ENCODE measurements at regions of chr9 and their contacts with region 1.

Region 1: GRCh38 chr9:115013998-115014397 is 83.6 kb upstream of the TNFSF8 start:
- DNase-seq: peak; percentile 34 to 44
- ATAC-seq: peak in 1 of 2 donors; percentile 54
- H3K4me3 ChIP-seq: no peak overlapping the region
- H3K27ac ChIP-seq: no peak overlapping the region
- H3K4me1 ChIP-seq: no peaks in the 10 kb centered on the region
- H3K27me3 ChIP-seq: no peaks in the 10 kb centered on the region
- CTCF ChIP-seq: peak; percentile 49 to 74 (median 67)
- POLR2A ChIP-seq: no peak

Region 2: DNA sequence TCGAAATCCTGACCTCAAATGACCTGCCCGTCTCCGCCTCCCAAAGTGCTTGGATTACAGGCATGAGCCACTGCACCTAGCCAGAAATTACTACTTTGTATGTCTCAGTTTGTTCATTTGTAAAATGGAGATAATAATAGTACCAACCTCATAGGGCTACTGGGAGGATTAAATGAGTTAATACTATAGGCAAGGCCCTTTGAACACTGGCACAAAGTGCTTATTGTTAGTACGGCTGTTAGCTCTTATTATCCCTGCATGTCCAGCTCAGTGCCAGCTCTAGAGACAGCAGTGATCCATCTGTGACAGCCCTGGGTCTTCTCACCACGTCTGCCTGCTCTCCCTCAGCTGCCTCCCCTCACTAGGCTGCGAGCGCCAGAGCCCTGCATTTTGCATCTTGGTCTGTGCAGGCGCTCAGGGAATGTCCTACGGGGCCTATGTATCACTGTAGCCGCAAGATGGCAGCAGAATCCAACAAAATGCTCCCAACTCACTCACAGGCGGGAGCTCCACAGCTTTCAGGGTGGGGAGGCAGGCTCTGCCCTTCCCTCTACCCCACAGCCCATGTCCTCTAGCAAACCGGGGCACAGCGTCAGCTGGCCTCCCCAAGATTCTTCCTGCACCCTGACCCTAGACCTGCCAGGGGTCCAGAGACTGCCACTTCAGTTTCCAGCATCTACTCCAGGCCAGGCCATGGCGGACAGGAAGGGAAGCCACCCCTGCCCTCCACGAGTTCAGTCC is 608.5 kb before region 1 on chr9:
- in situ Hi-C with region 1: loop called (anchors 10 kb)
- intact Hi-C with region 1: no loop called
- DNase-seq: peak; percentile 38 to 63
- ATAC-seq: peak; percentile 95 to 97
- H3K4me3 ChIP-seq: no peak overlapping the region
- H3K27ac ChIP-seq: no peak overlapping the region
- H3K4me1 ChIP-seq: no peaks in the 10 kb centered on the region
- H3K27me3 ChIP-seq: no peaks in the 10 kb centered on the region
- CTCF ChIP-seq: peak; percentile 62 to 86 (median 74)
- POLR2A ChIP-seq: no peak

Region 3: DNA sequence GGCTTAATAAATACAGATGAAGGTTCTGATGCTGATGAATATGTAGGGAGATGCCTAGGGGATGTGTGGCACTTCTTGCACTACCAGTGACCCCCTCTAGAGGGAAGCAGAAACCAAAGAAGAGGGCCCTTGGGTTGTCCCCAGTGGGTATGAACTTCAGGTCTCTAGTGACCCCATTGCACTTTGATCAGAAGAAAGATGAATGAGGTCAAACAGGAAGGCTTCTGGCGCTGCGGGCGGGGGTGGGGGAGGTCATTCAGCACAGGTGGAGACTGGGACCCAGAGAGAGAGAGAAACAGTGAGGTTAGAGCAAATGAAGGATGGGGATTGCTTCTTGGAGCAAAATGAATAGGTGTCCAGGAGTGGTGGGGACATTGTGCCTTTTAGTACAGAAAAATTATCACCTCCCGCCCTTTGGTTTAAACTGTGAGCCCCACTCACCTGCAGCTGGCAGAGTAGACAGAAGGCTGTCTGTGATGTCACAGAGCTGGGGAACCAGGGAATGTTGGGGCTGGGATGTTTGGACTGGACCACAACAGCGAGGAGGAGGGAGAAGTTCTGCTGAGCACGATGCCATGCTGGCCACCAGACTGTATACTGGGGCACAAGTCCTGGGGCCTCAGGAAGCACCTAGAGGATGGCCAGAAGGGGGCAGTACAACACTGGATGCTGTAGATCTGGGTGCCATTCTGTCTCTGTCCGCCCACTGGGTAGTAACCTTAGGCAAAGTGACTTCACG is 332.2 kb before region 1 on chr9 and contains the start of gene TEX48:
- in situ Hi-C with region 1: loop called in 2 of 4 experiments (anchors 5 to 10 kb)
- intact Hi-C with region 1: no loop called
- DNase-seq: peak in 1 of 2 donors; percentile 19
- ATAC-seq: no peak
- H3K4me3 ChIP-seq: no peak within 1 kb of the TSS
- H3K27ac ChIP-seq: no peak within 1 kb of the TSS
- H3K4me1 ChIP-seq: no peaks in the 10 kb centered on the region
- H3K27me3 ChIP-seq: peaks cover 0 to 3% (median 0%) of the 10 kb centered on the region in 3 donors
- CTCF ChIP-seq: peak in 2 of 5 experiments; percentile 42 to 47
- POLR2A ChIP-seq: no peak
- total RNA-seq, gene TEX48: not detected

Region 4: DNA sequence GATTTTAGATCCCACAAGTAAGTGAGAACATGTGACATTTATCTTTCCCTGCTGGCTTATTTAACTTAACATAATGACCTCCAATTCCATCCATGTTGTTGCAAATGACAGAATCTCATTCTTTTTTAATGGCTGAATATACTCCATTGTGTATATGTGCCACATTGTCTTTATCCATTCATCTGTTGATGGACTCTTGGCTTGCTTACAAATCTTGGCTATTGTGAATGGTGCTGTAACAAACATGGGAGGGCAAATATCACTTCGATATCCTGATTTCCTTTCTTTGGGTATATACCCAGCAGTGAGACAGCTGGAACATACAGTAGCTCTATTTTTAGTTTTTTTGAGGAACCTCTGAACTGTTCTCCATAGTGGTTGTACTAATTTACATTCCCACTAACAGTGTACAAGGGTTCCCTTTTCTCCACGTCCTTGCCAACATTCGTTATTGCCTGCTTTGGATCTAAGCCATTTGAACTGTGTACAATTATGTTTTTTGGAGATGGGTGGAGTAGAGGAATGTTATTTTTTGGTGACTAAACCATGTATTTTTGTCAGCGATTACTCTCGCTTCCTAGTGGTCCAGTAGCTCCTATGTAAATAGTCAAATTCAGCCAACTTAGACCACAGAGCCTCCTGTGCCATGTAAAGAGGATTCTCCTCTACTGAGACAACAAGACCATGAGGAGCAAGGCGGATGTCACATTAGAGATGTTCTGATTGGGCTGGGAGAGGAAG is 268.7 kb before region 1 on chr9:
- in situ Hi-C with region 1: loop called in 2 of 4 experiments (anchors 5 kb)
- intact Hi-C with region 1: no loop called
- DNase-seq: no peak
- ATAC-seq: no peak
- H3K4me3 ChIP-seq: no peak overlapping the region
- H3K27ac ChIP-seq: no peak overlapping the region
- H3K4me1 ChIP-seq: no peaks in the 10 kb centered on the region
- H3K27me3 ChIP-seq: no peaks in the 10 kb centered on the region
- CTCF ChIP-seq: no peak
- POLR2A ChIP-seq: no peak

Region 5: GRCh38 chr9:114836769-114837168 is 177.2 kb before region 1 on chr9:
- in situ Hi-C with region 1: no loop called
- intact Hi-C with region 1: no loop called
- DNase-seq: no peak
- ATAC-seq: no peak
- H3K4me3 ChIP-seq: no peak overlapping the region
- H3K27ac ChIP-seq: no peak overlapping the region
- H3K4me1 ChIP-seq: no peaks in the 10 kb centered on the region
- H3K27me3 ChIP-seq: no peaks in the 10 kb centered on the region
- CTCF ChIP-seq: no peak
- POLR2A ChIP-seq: no peak

Region 6: DNA sequence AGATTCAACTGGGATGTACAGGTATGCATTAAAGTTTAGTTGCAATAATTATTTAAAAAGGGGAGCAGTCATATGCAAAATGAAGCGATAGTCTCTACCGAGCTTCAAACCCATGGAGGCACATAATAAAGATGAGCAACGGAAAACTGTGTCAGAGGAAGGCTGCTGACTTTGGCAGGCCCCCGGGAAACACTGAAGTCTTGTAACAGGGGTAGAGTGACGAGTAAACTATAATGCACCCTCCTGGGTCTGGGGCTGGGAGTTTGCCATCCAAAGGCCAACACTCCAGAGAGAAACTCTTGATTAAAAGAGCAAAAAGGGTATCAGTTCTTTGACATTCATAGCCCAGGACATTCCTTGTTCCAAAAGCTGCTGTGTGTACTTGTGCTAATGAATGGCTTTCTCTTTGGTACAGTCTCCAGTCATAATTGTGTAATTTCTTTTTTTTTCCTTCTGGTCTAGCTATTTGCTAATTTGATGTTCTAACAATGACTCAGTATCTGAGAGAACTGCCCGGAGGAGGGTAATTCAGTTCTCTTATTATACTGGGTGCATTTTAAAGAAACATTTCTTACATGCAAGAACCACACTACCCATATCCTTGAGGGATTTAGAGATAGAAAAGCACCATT is 44.8 kb after region 1 on chr9:
- in situ Hi-C with region 1: no loop called
- intact Hi-C with region 1: no loop called
- DNase-seq: no peak
- ATAC-seq: no peak
- H3K4me3 ChIP-seq: no peak overlapping the region
- H3K27ac ChIP-seq: no peak overlapping the region
- H3K4me1 ChIP-seq: no peaks in the 10 kb centered on the region
- H3K27me3 ChIP-seq: no peaks in the 10 kb centered on the region
- CTCF ChIP-seq: no peak
- POLR2A ChIP-seq: no peak

Region 7: DNA sequence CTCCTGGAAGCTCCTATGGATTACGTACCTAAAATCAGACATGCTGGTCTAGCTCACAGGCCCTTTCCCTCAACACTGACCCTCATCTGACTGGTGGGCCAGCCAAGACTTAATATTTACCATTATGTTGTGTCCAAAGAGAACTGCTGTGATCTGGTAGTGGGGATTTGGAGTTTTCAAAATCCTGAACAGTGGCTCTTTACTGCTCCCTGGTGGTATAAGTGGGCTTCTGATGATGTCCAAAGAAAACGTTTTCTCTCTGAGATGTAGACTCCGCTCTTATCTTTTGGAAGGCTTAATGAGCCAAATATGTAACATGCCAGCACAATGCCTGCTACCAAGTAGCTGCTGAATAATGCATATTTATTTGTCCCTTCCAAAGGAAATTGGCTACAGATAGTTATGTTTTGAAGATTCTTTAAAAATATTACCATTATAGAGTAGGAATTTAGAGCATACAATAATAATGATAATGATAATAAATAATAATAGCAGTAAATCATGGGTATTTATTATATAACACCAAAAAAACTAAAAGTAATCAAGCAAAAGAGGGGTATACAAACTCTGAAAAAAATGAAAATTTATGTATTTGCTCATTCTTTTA is 510.6 kb after region 1 on chr9:
- in situ Hi-C with region 1: loop called in 1 of 4 experiments (anchors 10 kb)
- intact Hi-C with region 1: loop called (anchors 10 kb)
- DNase-seq: no peak
- ATAC-seq: no peak
- H3K4me3 ChIP-seq: no peak overlapping the region
- H3K27ac ChIP-seq: no peak overlapping the region
- H3K4me1 ChIP-seq: no peaks in the 10 kb centered on the region
- H3K27me3 ChIP-seq: no peaks in the 10 kb centered on the region
- CTCF ChIP-seq: peak in 4 of 5 experiments; percentile 33 to 54 (median 46)
- POLR2A ChIP-seq: no peak

Measured in gastrocnemius medialis (tissue), 4 donors.